ENCODE measurements at regions of chr14 and their contacts with region 1.

Region 1: GRCh38 chr14:102591889-102592763 is at the start of gene RCOR1:
- DNase-seq: peak; percentile 94
- ATAC-seq: peak; percentile 84
- H3K4me3 Mint-ChIP-seq: peak within 1 kb of the TSS; percentile 93
- H3K27ac Mint-ChIP-seq: peak within 1 kb of the TSS; percentile 97
- H3K4me1 Mint-ChIP-seq: peaks cover 26% of the 10 kb centered on the region
- H3K27me3 Mint-ChIP-seq: no peaks in the 10 kb centered on the region
- CTCF ChIP-seq: no peak
- total RNA-seq, gene RCOR1: 21.0 and 23.0 TPM in 2 replicates

Region 2: DNA sequence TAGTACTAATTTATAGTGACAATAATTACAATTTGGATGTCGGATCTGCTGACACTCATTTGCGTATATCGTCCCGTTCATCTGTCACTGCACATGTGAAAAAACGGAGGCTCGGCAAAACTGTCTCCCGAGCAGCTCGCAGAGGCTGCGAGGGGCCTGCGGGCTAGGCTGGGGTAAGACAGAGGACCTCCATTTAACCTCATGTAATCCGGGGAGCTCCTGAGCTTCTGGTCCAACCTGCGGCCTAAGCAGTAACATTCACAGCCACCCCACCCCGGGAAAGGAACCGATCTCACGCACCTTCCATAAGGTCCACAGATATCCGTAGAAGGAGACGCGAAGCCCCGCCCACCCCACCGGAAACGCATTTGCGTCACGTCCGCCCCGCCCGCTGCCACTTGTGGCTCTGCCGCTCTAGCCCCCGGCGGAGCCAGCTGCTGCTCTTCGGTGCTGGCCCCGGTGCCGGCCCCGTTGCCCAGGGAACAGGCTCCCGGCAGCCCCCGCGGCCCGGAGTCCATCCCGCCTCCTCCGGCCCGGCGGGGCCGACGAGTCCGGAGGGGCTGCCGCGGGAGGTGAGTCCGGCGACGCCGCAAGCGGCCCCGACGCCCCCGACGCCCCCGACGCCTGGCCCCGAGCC is 229.5 kb before region 1 on chr14 and contains the starts of genes CINP and TECPR2:
- CTCF ChIA-PET with region 1: no interaction called
- POLR2A ChIA-PET with region 1: no interaction called
- intact Hi-C with region 1: loop called (anchors 1 kb)
- DNase-seq: peak; percentile 92
- ATAC-seq: peak; percentile 82
- H3K4me3 Mint-ChIP-seq: no peak within 1 kb of the TSS
- H3K27ac Mint-ChIP-seq: peak within 1 kb of the TSS; percentile 97
- H3K4me1 Mint-ChIP-seq: peaks cover 35% of the 10 kb centered on the region
- H3K27me3 Mint-ChIP-seq: no peaks in the 10 kb centered on the region
- CTCF ChIP-seq: no peak
- total RNA-seq, gene CINP: 48.6 and 57.5 TPM in 2 replicates
- total RNA-seq, gene TECPR2: 9.9 and 11.8 TPM in 2 replicates

Region 3: GRCh38 chr14:102555264-102555831 is 36.8 kb before region 1 on chr14:
- CTCF ChIA-PET with region 1: no interaction called
- POLR2A ChIA-PET with region 1: interaction called, 13 read pairs
- intact Hi-C with region 1: loop called (anchors 1 kb)
- DNase-seq: peak; percentile 66
- ATAC-seq: peak; percentile 86
- H3K4me3 Mint-ChIP-seq: peak overlapping the region; percentile 78
- H3K27ac Mint-ChIP-seq: peak overlapping the region; percentile 69
- H3K4me1 Mint-ChIP-seq: peaks cover 6% of the 10 kb centered on the region
- H3K27me3 Mint-ChIP-seq: no peaks in the 10 kb centered on the region
- CTCF ChIP-seq: no peak

Region 4: DNA sequence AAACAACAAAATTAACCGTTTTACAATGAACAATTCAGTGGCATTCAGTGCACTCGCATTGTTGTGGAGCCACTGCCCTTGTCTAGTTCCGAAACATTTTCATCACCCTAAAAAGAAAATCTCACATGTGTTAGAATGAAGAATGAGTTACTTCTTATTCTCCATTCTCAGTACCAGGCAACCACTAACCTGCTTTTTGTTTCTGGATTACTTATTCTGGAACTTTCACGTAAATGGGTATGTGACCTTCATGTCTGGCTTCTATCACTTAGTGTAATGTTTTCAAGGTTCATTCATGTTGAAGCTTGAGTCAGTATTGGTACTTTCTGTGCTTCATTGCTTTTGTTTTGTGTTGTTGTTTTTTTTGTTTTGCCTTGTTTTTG is 15.9 kb after region 1 on chr14:
- CTCF ChIA-PET with region 1: interaction called, 16 read pairs
- POLR2A ChIA-PET with region 1: interaction called, 8 read pairs
- intact Hi-C with region 1: loop called (anchors 1 kb)
- DNase-seq: no peak
- ATAC-seq: no peak
- H3K4me3 Mint-ChIP-seq: no peak overlapping the region
- H3K27ac Mint-ChIP-seq: no peak overlapping the region
- H3K4me1 Mint-ChIP-seq: peaks cover 78% of the 10 kb centered on the region
- H3K27me3 Mint-ChIP-seq: no peaks in the 10 kb centered on the region
- CTCF ChIP-seq: no peak

Region 5: DNA sequence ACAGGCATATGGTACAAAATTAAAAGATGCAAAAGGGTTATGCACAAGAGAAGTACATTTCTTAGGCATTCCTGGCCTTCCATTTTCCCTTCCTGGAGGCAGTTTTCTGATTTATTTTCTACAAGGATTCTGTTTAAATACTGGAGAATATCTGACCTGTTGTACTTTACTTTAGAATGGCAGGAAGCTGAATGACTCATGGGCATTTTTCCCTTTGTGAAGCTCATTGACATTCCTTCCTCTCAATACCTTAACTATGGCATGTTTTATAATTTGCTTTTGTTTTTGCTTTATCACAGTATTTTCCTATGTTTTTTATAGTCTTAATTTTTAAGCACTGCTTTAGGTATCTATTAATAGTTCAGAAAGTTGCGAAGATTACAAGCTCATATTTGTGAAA is 63.0 kb after region 1 on chr14:
- CTCF ChIA-PET with region 1: interaction called, 4 read pairs
- POLR2A ChIA-PET with region 1: interaction called, 11 read pairs
- intact Hi-C with region 1: no loop called
- DNase-seq: no peak
- ATAC-seq: no peak
- H3K4me3 Mint-ChIP-seq: no peak overlapping the region
- H3K27ac Mint-ChIP-seq: no peak overlapping the region
- H3K4me1 Mint-ChIP-seq: peaks cover 45% of the 10 kb centered on the region
- H3K27me3 Mint-ChIP-seq: no peaks in the 10 kb centered on the region
- CTCF ChIP-seq: no peak

Region 6: GRCh38 chr14:102768223-102769048 is 176.3 kb after region 1 on chr14:
- CTCF ChIA-PET with region 1: interaction called, 4 read pairs
- POLR2A ChIA-PET with region 1: no interaction called
- intact Hi-C with region 1: loop called (anchors 2 kb)
- DNase-seq: peak; percentile 46
- ATAC-seq: peak; percentile 86
- H3K4me3 Mint-ChIP-seq: peak overlapping the region; percentile 68
- H3K27ac Mint-ChIP-seq: peak overlapping the region; percentile 97
- H3K4me1 Mint-ChIP-seq: peaks cover 85% of the 10 kb centered on the region
- H3K27me3 Mint-ChIP-seq: no peaks in the 10 kb centered on the region
- CTCF ChIP-seq: no peak

Region 7: GRCh38 chr14:102917469-102918211 is 325.5 kb after region 1 on chr14:
- CTCF ChIA-PET with region 1: no interaction called
- POLR2A ChIA-PET with region 1: no interaction called
- intact Hi-C with region 1: loop called (anchors 5 kb)
- DNase-seq: peak; percentile 64
- ATAC-seq: peak; percentile 23
- H3K4me3 Mint-ChIP-seq: no peak overlapping the region
- H3K27ac Mint-ChIP-seq: peak overlapping the region; percentile 42
- H3K4me1 Mint-ChIP-seq: peaks cover 18% of the 10 kb centered on the region
- H3K27me3 Mint-ChIP-seq: no peaks in the 10 kb centered on the region
- CTCF ChIP-seq: no peak